ENCODE measurements at regions of chr1 and their contacts with region 1.

Region 1: GRCh38 chr1:86499987-86500593 is 31.4 kb downstream of the CLCA1 start:
- DNase-seq: no peak
- H3K4me3 ChIP-seq: no peak overlapping the region
- H3K27ac ChIP-seq: no peak overlapping the region
- H3K4me1 ChIP-seq: peaks cover 0 to 13% of the 10 kb centered on the region in 2 donors
- H3K27me3 ChIP-seq: no peaks in the 10 kb centered on the region
- CTCF ChIP-seq: peak; percentile 66 to 98 (median 93)
- POLR2A ChIP-seq: no peak

Region 2: DNA sequence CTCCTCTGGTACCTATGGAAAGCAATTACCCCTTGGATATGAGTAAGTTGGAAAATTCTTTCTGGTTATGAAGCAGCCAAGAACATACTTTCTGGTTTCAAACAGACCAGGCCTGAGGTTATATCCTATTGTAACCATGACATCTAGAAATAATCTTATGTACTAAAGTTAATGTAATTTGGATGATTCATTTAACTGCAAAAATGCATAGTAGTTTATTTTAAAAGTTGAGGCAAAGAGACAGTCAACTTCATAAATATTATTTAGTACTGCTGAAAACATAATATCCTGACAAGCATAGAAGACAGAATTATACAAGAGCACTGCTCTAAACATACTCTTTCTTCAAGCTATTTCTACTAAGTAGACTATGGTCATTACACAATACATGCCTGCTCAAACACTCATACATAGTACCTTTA is 129.5 kb before region 1 on chr1:
- intact Hi-C with region 1: loop called (anchors 5 to 10 kb)
- DNase-seq: no peak
- H3K4me3 ChIP-seq: no peak overlapping the region
- H3K27ac ChIP-seq: no peak overlapping the region
- H3K4me1 ChIP-seq: no peaks in the 10 kb centered on the region
- H3K27me3 ChIP-seq: no peaks in the 10 kb centered on the region
- CTCF ChIP-seq: no peak
- POLR2A ChIP-seq: no peak

Region 3: DNA sequence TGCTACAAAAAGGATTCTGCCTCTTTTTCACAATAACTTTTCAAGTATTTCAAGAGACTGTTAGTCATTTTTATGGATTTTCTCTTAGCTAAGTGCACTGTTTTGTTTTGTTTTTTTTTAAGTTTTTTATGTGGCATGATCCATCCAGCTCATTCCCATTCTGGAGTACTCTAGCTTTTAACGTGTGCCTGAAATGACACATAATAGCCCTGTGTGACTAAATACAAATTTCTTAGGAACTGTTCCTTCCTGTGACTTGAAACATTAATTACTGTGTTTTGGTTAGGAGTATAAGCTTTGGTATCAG is 558.2 kb after region 1 on chr1:
- intact Hi-C with region 1: no loop called
- DNase-seq: no peak
- H3K4me3 ChIP-seq: no peak overlapping the region
- H3K27ac ChIP-seq: peak overlapping the region in 1 of 5 donors; percentile 25
- H3K4me1 ChIP-seq: peaks cover 0 to 15% of the 10 kb centered on the region in 2 donors
- H3K27me3 ChIP-seq: no peaks in the 10 kb centered on the region
- CTCF ChIP-seq: no peak
- POLR2A ChIP-seq: no peak